Right ventricle myocardium superior (tissue), 1 donor: ENCODE measurements at regions of chr1 and their contacts with region 1.

Region 1: DNA sequence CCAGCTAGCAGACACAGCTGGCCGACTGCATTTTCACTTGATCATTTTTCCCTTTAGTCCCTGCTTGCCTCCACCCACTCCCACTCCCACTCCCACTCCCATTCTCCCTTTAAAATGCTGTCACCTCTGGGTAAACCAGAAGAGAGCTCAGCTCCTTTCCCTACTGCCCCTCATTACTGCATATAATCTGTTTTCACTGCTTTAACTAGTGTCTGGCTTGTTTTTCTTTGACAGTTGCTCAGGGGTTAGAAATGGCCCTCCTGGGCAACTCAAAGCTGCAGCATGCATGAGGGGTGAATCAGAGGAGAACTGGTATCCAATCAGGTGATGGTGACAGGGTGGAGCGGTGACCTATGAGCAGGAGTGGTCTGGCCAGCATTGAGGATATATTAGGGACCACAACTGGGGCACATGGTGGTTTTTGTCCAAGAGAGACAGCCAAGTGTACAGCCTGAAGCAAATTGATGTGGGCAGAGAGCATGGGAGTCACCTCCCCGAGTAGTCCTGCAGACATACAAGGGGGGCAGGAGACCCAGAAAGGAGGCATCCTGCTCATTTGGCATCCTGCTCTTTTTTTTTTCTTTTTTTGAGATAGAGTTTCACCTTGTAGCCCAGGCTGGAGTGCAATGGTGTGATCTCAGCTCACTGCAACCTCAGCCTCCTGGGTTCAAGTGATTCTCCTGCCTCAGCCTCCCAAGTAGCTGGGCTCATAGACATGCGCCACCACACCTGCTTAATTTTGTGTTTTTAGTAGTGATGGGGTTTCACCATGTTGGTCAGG is 42.6 kb upstream of the SRSF10 start:
- DNase-seq: no peak
- ATAC-seq: no peak

Region 2: DNA sequence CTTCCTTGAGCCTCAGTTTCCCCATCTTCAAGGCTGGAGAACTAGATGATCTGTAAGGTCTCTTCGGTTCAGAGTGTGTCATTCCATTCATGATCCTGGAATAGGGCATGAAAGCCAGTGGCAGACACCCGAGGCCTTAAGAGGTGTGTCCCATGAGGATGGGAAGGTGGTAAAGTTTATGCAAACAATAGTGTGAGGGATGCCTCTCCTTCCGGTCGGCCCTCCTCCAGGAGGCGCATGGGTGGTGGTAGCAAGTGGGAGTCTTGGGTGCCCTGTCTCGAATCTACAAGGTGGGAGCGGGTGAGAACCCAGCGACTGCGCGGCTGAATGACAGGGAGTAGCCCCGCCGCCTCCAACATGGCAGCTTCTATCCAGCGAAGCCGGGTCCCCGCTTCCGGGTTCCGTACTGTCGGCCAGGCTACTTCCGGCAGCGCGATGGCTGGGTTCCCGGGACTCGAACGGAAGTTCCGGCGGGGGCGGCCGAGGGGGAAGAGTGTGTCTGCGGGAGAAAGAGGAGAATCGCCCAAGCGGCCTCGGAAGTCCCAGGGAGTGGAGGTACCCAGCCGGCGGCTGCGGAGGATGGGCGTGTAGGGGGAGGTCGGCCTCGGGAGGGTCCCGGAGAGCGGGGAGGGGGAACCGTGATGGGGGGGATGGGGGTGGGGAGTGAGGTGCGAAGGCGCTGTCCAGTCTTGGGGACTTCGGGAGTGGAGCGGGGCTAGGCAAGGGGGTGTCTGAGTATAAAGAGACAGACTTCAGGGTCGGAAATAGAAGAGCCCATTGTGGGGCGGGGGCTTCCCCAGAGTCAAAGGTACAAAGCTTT is 231.9 kb before region 1 on chr1 and contains the start of gene LYPLA2:
- intact Hi-C with region 1: no loop called
- DNase-seq: peak; percentile 97
- ATAC-seq: peak; percentile 93
- total RNA-seq, gene LYPLA2: 26.8 TPM

Region 3: GRCh38 chr1:23979878-23980724 is 42.7 kb before region 1 on chr1 and contains the start of gene SRSF10:
- intact Hi-C with region 1: loop called (anchors 5 kb)
- DNase-seq: peak; percentile 99
- ATAC-seq: peak; percentile 99
- total RNA-seq, gene SRSF10: 51.9 TPM

Region 4: DNA sequence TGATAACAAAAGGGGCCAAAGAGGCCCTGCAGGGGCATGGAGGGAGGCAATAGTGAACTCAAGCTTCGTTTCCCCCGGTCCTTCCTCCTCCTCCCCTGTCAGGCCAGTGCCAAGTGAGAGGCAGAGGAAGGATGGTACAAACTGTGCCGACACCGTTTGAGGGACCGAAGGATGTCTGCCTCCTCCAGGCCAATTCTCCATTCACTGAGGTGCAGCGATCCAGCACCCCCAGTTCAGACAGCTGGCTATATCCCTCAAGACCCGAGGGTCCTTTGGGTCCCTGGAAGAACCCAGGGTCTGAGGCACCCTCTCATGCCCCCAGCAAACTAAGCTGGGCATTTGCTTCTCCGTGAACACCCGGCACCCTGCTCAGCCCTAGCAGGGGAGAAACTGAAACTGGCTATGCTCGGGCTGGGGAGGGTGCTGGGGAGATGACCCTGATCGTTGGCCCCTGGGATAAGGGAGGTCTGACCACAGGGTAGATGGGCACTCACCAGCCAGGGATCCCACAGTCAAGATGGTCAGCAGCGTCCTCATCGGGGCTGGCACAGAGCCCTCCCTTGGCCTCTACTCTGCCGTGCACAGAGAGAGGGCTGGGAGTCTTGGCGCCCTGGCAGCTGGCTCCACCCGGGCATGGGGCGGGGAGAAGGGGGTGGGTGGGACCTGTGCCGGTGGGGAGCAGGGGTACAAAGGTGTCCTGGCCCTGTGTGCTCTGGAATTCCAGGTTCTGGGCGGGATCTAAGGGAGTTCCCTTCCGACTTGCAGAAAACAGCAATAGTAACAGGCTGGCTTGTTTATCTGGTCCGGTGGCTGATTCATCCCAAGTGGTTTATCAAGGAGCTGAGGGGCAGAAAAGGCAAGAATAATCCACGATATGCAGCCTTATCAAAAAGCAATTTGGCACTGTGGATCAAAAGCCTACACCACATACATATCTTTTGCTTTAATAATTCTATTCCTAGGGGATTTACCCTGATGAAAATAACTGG is 120.1 kb after region 1 on chr1 and contains the start of gene IL22RA1:
- intact Hi-C with region 1: no loop called
- DNase-seq: peak; percentile 58
- ATAC-seq: peak; percentile 81
- total RNA-seq, gene IL22RA1: 0.16 TPM